Activated CD4-positive, alpha-beta memory T cell treated with anti-CD3 and anti-CD28 coated beads, Interleukin-2, amount 10 ng/mL, durations not matched to agents 7 days and 5 days (primary cell): ENCODE measurements at regions of chr15 and their contacts with region 1.

Region 1: DNA sequence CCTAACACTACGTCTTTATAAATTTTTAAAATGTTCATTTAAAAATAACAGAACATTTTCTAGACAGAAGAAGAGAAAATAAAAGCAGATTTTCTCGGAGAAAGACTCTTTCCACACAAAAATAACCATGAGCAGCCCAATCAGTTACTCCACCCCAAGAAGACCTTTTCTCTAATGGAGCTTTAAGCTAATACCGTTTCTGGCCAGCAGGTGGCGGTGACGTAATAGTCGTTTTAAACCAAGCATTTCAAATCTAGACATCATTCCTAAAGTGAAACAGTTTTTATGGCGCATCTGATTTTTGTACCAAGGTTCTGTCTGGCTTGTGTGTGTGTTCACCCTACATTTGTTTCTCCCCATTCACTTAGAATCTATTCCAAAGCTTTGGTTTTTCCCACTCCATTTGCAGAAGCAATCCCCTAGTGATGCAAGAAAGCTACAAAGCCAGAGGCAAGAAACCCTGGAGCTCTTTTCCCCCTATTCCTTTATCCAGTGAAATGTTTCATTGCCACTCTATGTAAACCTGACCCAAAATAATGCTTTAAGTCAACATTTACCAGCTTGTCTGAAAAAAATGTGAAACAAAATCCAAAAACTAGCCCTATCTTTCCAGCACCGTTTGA is 336.7 kb upstream of the IGF1R start:
- DNase-seq: peak; percentile 73
- H3K4me3 Mint-ChIP-seq: no peak overlapping the region
- H3K27ac Mint-ChIP-seq: no peak overlapping the region
- H3K4me1 Mint-ChIP-seq: no peaks in the 10 kb centered on the region
- H3K27me3 Mint-ChIP-seq: peaks cover 5% of the 10 kb centered on the region

Region 2: GRCh38 chr15:98196371-98196770 is 115.3 kb before region 1 on chr15:
- CTCF ChIA-PET with region 1: no interaction called
- POLR2A ChIA-PET with region 1: no interaction called
- DNase-seq: no peak
- H3K4me3 Mint-ChIP-seq: no peak overlapping the region
- H3K27ac Mint-ChIP-seq: no peak overlapping the region
- H3K4me1 Mint-ChIP-seq: no peaks in the 10 kb centered on the region
- H3K27me3 Mint-ChIP-seq: no peaks in the 10 kb centered on the region

Region 3: GRCh38 chr15:98257290-98257689 is 54.4 kb before region 1 on chr15:
- CTCF ChIA-PET with region 1: no interaction called
- POLR2A ChIA-PET with region 1: no interaction called
- DNase-seq: no peak
- H3K4me3 Mint-ChIP-seq: no peak overlapping the region
- H3K27ac Mint-ChIP-seq: no peak overlapping the region
- H3K4me1 Mint-ChIP-seq: no peaks in the 10 kb centered on the region
- H3K27me3 Mint-ChIP-seq: no peaks in the 10 kb centered on the region

Region 4: DNA sequence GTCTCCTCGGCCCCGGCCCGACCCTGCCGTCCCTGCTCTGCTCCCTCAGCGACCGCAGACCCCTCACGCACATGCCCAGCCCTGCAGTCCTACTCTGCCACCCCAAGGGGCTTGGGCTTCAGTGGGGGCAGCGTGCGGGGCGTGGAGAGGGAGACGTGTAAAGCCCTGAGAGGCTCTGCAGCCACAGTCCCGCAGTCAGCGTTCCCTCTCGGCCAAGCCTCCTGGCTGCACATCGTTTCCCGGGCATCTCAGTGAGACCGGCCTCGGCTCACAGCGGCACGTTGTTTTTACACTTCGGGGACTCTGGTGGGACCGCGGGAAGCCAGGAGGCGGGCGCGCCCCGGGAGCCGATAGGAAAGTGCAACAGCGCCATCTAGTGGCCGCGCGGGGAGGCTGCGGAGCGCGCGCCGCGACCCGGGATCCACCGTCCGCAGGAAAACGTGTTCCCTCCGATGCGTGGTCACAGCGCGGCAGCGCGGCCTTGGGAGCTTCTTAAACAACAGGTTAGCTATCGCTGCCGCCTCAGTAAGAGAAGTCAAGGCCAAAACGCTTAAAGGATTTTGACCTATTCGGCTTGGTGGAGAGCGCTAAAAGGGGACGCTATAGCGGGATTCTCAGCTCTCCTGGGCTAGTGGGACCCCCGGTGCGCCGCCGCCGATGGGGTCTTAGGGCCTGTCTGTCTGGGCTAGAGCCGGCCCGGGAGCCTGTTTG is 109.9 kb after region 1 on chr15:
- CTCF ChIA-PET with region 1: interaction called, 43 read pairs
- POLR2A ChIA-PET with region 1: no interaction called
- DNase-seq: peak; percentile 53
- H3K4me3 Mint-ChIP-seq: no peak overlapping the region
- H3K27ac Mint-ChIP-seq: no peak overlapping the region
- H3K4me1 Mint-ChIP-seq: peaks cover 3% of the 10 kb centered on the region
- H3K27me3 Mint-ChIP-seq: peaks cover 23% of the 10 kb centered on the region

Region 5: DNA sequence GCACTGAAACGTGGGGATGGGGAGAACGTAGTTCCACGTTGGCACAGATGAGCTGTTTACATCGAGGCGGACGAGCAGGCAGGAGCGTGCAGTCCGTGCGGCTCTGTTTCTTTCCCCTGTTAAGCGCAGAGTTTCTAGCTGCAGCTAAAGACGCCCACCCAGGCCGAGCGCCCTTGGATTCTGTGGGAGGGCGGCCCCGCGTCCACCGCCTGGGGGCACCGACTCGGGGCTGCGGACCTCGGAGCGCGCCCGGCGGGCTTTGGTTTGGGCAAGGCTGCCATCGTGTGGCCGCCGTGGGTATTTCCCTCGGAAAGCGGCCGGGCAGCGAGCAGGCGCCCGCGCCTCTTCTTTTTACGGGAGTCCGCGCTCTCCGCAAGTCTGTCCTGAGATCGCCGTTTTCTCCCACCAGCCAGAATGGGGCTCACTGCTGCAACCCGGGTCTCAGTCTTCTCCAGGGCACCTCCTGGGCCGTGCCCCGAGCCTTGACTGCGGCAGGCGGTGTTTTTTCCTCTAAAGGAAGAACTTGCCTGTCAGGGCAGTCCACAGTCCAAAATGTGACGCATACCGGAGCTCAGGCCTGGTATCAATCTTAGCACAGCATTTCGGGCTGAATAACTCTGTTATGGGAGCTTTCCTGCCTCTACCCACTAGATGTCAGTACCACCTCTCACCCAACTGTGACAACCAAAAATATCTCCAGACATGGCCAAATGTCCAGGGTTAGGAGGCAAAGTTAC is 116.7 kb after region 1 on chr15:
- CTCF ChIA-PET with region 1: interaction called, 43 read pairs
- POLR2A ChIA-PET with region 1: no interaction called
- DNase-seq: peak; percentile 61
- H3K4me3 Mint-ChIP-seq: no peak overlapping the region
- H3K27ac Mint-ChIP-seq: no peak overlapping the region
- H3K4me1 Mint-ChIP-seq: peaks cover 5% of the 10 kb centered on the region
- H3K27me3 Mint-ChIP-seq: peaks cover 21% of the 10 kb centered on the region